ENCODE measurements at regions of chr17 and their contacts with region 1.

Region 1: GRCh38 chr17:22233382-22233781 is 541.1 kb downstream of the KCNJ18 start:
- DNase-seq: no peak
- H3K4me3 ChIP-seq: no peak overlapping the region
- H3K4me3 Mint-ChIP-seq: no peak overlapping the region
- H3K27ac ChIP-seq: no peak overlapping the region
- H3K27ac Mint-ChIP-seq: no peak overlapping the region
- H3K4me1 ChIP-seq: no peaks in the 10 kb centered on the region
- H3K4me1 Mint-ChIP-seq: no peaks in the 10 kb centered on the region
- H3K27me3 ChIP-seq: no peaks in the 10 kb centered on the region
- H3K27me3 Mint-ChIP-seq: peaks cover 0 to 1% (median 0%) of the 10 kb centered on the region in 3 donors
- CTCF ChIP-seq: no peak

Region 2: GRCh38 chr17:22193113-22193512 is 40.3 kb before region 1 on chr17:
- intact Hi-C with region 1: no loop called
- DNase-seq: no peak
- H3K4me3 ChIP-seq: no peak overlapping the region
- H3K4me3 Mint-ChIP-seq: no peak overlapping the region
- H3K27ac ChIP-seq: no peak overlapping the region
- H3K27ac Mint-ChIP-seq: no peak overlapping the region
- H3K4me1 ChIP-seq: no peaks in the 10 kb centered on the region
- H3K4me1 Mint-ChIP-seq: no peaks in the 10 kb centered on the region
- H3K27me3 ChIP-seq: no peaks in the 10 kb centered on the region
- H3K27me3 Mint-ChIP-seq: peaks cover 0 to 2% (median 1%) of the 10 kb centered on the region in 3 donors
- CTCF ChIP-seq: no peak

Region 3: DNA sequence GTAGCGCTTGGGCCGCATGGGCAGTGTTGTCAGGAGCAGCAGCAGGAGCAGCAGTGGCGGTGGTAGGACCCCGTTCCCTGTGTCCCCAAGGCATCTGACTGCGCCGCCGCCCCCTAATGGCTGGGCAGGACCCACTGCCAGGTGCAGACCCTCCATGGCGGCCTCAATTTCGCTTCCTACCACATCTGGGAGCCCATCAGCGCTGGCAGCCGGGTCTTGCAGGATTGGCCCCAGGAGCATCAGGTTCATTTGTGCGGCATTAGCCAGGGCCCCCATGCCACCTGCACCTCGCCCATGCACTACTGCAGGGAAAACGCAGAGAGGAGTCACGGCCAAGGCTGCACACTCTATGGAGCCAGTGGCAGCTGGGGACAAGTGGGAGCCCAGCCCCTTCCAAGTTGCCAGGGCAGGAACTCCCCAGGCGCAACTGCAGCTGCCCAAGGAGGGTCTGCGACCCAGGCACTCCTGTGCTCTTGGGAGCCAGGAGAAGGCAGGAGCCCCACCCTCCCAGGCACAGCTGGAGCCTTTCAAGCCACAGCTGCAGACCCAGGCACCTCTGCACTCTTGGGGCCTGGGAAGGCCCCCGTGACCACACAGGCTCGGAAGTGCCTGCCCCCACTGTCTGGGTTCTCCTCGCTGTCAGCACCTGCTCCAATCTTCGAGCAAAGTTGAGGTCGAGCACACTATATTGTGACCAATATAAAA is 53.1 kb after region 1 on chr17:
- intact Hi-C with region 1: loop called in 1 of 2 experiments (anchors 10 kb)
- DNase-seq: no peak
- H3K4me3 ChIP-seq: no peak overlapping the region
- H3K4me3 Mint-ChIP-seq: no peak overlapping the region
- H3K27ac ChIP-seq: no peak overlapping the region
- H3K27ac Mint-ChIP-seq: no peak overlapping the region
- H3K4me1 ChIP-seq: no peaks in the 10 kb centered on the region
- H3K4me1 Mint-ChIP-seq: no peaks in the 10 kb centered on the region
- H3K27me3 ChIP-seq: no peaks in the 10 kb centered on the region
- H3K27me3 Mint-ChIP-seq: no peaks in the 10 kb centered on the region
- CTCF ChIP-seq: no peak